Left lung (tissue), 14 donors: ENCODE measurements at regions of chr15 and their contacts with region 1.

Region 1: GRCh38 chr15:73637527-73637926 is 4.3 kb upstream of the NPTN start:
- DNase-seq: no peak
- ATAC-seq: no peak
- H3K4me3 ChIP-seq: no peak overlapping the region
- H3K27ac ChIP-seq: no peak overlapping the region
- H3K4me1 ChIP-seq: peaks cover 10 to 17% of the 10 kb centered on the region in 2 donors
- H3K27me3 ChIP-seq: peaks cover 0 to 16% of the 10 kb centered on the region in 2 donors
- CTCF ChIP-seq: no peak

Region 2: DNA sequence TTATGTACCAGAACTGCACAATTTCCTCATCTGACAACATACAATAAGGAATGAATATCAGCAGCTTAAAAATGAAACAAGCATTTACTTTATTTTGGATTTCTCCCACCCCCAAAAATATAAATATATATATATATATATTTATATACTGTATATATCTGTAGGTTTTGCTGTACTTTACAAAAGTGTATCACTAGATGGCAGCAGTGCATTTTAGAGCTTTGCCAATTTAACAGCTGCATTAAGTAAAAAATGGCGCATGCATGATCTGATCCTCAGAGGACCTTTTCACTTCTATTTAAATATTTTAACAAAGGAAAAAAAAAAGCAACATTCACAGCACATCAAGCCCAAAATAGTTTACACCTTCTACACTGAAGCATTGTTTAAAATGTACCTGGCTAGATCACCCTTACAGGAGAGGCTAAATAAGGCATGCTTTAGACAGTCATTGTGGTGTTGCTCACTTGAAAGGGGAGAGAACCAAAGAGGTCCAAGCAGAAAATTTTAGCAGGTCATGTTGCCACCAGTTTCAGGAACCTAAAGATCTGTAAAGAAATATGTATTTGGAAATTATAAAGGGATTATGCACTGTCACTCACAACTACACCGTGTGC is 76.9 kb before region 1 on chr15:
- intact Hi-C with region 1: loop called in 1 of 2 experiments (anchors 5 kb)
- DNase-seq: peak in 2 of 4 donors; percentile 67 to 84
- ATAC-seq: peak; percentile 77
- H3K4me3 ChIP-seq: no peak overlapping the region
- H3K27ac ChIP-seq: no peak overlapping the region
- H3K4me1 ChIP-seq: peaks cover 0 to 14% of the 10 kb centered on the region in 2 donors
- H3K27me3 ChIP-seq: no peaks in the 10 kb centered on the region
- CTCF ChIP-seq: peak in 1 of 2 donors; percentile 41

Region 3: GRCh38 chr15:73697033-73697467 is 59.5 kb after region 1 on chr15:
- intact Hi-C with region 1: loop called in 1 of 2 experiments (anchors 5 kb)
- DNase-seq: peak; percentile 87 to 97 (median 90)
- ATAC-seq: peak; percentile 89
- H3K4me3 ChIP-seq: no peak overlapping the region
- H3K27ac ChIP-seq: peak overlapping the region; percentile 33 to 53
- H3K4me1 ChIP-seq: peaks cover 10 to 41% of the 10 kb centered on the region in 2 donors
- H3K27me3 ChIP-seq: peaks cover 0 to 7% of the 10 kb centered on the region in 2 donors
- CTCF ChIP-seq: no peak